ENCODE measurements at regions of chr3 and their contacts with region 1.

Region 1: GRCh38 chr3:11335056-11335608 is 62.9 kb downstream of the ATG7 start:
- DNase-seq: no peak
- ATAC-seq: peak in 3 of 4 donors; percentile 48 to 67 (median 59)
- H3K4me3 ChIP-seq: no peak overlapping the region
- H3K27ac ChIP-seq: no peak overlapping the region
- H3K4me1 ChIP-seq: no peaks in the 10 kb centered on the region
- H3K27me3 ChIP-seq: no peaks in the 10 kb centered on the region
- CTCF ChIP-seq: peak; percentile 42 to 75 (median 60)
- POLR2A ChIP-seq: no peak

Region 2: DNA sequence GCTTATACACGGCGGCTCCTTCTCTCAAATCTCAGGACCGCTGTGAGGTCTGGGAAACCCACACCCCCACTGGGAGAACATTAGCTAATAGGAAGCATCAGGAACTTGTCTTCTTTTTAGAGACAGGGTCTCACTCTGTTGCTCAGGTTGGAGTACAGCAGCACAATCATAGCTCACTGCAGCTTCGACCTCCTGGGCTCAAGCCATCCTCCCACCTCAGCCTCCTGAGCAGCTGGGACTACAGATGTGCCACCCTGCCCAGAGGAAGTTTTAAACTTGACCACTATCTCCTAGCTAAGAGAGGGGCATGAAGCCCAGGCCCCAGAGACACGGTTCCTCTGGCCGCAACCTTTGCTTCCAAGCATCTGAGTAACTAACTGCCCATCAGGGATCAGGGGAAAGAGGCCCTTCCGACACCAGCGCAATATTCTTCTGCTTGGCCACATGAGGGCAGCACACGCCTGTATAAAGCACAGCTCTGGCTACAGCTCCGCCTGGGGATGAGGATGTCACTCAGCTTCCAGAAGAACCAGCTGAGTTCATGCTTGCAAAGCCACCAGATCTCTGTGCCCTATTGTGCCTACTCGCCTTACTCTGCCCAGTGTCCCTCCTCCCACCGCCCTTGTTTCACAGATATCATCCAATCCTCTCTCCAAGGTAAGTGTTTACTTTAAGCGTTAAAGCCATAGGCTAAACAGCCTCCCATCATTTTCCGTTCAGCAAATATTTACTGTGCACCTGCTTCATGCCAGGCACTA is 576.6 kb before region 1 on chr3:
- intact Hi-C with region 1: loop called in 4 of 10 experiments (anchors 5 to 10 kb)
- DNase-seq: peak in 4 of 5 donors; percentile 36 to 45 (median 41)
- ATAC-seq: peak; percentile 69 to 88 (median 84)
- H3K4me3 ChIP-seq: no peak overlapping the region
- H3K27ac ChIP-seq: no peak overlapping the region
- H3K4me1 ChIP-seq: no peaks in the 10 kb centered on the region
- H3K27me3 ChIP-seq: peaks cover 0 to 43% (median 11%) of the 10 kb centered on the region in 9 donors
- CTCF ChIP-seq: peak; percentile 49 to 74 (median 64)
- POLR2A ChIP-seq: no peak

Region 3: GRCh38 chr3:10945683-10946287 is 389.3 kb before region 1 on chr3:
- intact Hi-C with region 1: loop called in 2 of 10 experiments (anchors 5 to 10 kb)
- DNase-seq: peak; percentile 47 to 76 (median 61)
- ATAC-seq: peak; percentile 20 to 89 (median 84)
- H3K4me3 ChIP-seq: no peak overlapping the region
- H3K27ac ChIP-seq: no peak overlapping the region
- H3K4me1 ChIP-seq: peaks cover 0 to 8% (median 0%) of the 10 kb centered on the region in 12 donors
- H3K27me3 ChIP-seq: peaks cover 0 to 31% (median 0%) of the 10 kb centered on the region in 9 donors
- CTCF ChIP-seq: peak; percentile 71 to 94 (median 83)
- POLR2A ChIP-seq: no peak

Region 4: GRCh38 chr3:11140054-11140712 is 194.9 kb before region 1 on chr3:
- intact Hi-C with region 1: loop called in 1 of 10 experiments (anchors 10 kb)
- DNase-seq: peak in 3 of 5 donors; percentile 35 to 67 (median 45)
- ATAC-seq: peak in 3 of 4 donors; percentile 18 to 59 (median 57)
- H3K4me3 ChIP-seq: no peak overlapping the region
- H3K27ac ChIP-seq: peak overlapping the region in 2 of 12 donors; percentile 19 to 23
- H3K4me1 ChIP-seq: peaks cover 0 to 18% (median 0%) of the 10 kb centered on the region in 12 donors
- H3K27me3 ChIP-seq: peaks cover 0 to 3% (median 0%) of the 10 kb centered on the region in 9 donors
- CTCF ChIP-seq: no peak
- POLR2A ChIP-seq: no peak

Region 5: GRCh38 chr3:11236595-11237461 is 98.3 kb before region 1 on chr3:
- intact Hi-C with region 1: loop called (anchors 1 to 10 kb)
- DNase-seq: peak; percentile 16 to 74 (median 37)
- ATAC-seq: peak in 1 of 4 donors; percentile 42
- H3K4me3 ChIP-seq: no peak overlapping the region
- H3K27ac ChIP-seq: no peak overlapping the region
- H3K4me1 ChIP-seq: no peaks in the 10 kb centered on the region
- H3K27me3 ChIP-seq: peaks cover 0 to 14% (median 0%) of the 10 kb centered on the region in 9 donors
- CTCF ChIP-seq: peak; percentile 62 to 83 (median 72)
- POLR2A ChIP-seq: no peak

Region 6: GRCh38 chr3:11530153-11530721 is 195.1 kb after region 1 on chr3:
- intact Hi-C with region 1: no loop called
- DNase-seq: peak in 4 of 5 donors; percentile 47 to 82 (median 76)
- ATAC-seq: peak; percentile 78 to 89 (median 84)
- H3K4me3 ChIP-seq: no peak overlapping the region
- H3K27ac ChIP-seq: peak overlapping the region in 4 of 12 donors; percentile 7 to 37 (median 14)
- H3K4me1 ChIP-seq: peaks cover 0 to 34% (median 11%) of the 10 kb centered on the region in 12 donors
- H3K27me3 ChIP-seq: no peaks in the 10 kb centered on the region
- CTCF ChIP-seq: peak in 4 of 12 donors; percentile 8 to 26 (median 17)
- POLR2A ChIP-seq: no peak

Measured in heart left ventricle (tissue), 16 donors.